ENCODE measurements at regions of chr1 and their contacts with region 1.

Region 1: GRCh38 chr1:162056043-162056442 is 13.4 kb upstream of the NOS1AP start:
- DNase-seq: peak; percentile 74
- H3K4me3 ChIP-seq: no peak overlapping the region
- H3K27ac ChIP-seq: no peak overlapping the region
- H3K4me1 ChIP-seq: peaks cover 0 to 5% (median 2%) of the 10 kb centered on the region in 6 donors
- H3K27me3 ChIP-seq: peaks cover 0 to 33% (median 0%) of the 10 kb centered on the region in 7 donors
- CTCF ChIP-seq: peak; percentile 41 to 81 (median 68)
- POLR2A ChIP-seq: no peak

Region 2: GRCh38 chr1:162206749-162207635 is 150.9 kb after region 1 on chr1:
- intact Hi-C with region 1: no loop called
- DNase-seq: no peak
- H3K4me3 ChIP-seq: no peak overlapping the region
- H3K27ac ChIP-seq: no peak overlapping the region
- H3K4me1 ChIP-seq: no peaks in the 10 kb centered on the region
- H3K27me3 ChIP-seq: peaks cover 0 to 25% (median 0%) of the 10 kb centered on the region in 7 donors
- CTCF ChIP-seq: no peak
- POLR2A ChIP-seq: no peak

Region 3: DNA sequence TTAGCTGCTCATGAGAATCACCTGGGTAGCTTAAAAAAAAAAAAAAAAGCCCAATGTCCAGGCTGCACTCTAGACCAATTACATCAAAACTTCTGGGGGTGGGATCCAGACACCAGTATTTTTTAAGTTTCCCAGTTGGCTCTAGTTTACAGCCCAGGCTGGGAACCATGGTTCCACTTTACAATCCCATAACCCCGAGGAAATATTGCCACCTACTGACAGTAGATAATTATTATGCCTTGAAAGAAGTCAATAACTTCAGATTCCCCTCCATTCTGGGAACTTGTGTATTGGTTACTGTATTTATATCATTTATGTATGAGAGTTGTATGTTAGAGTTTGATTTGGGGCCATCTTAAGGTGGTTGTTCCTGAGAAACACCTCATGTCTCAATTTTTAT is 220.4 kb after region 1 on chr1:
- intact Hi-C with region 1: loop called (anchors 5 kb)
- DNase-seq: no peak
- H3K4me3 ChIP-seq: no peak overlapping the region
- H3K27ac ChIP-seq: no peak overlapping the region
- H3K4me1 ChIP-seq: no peaks in the 10 kb centered on the region
- H3K27me3 ChIP-seq: peaks cover 0 to 22% (median 0%) of the 10 kb centered on the region in 7 donors
- CTCF ChIP-seq: peak in 5 of 11 experiments; percentile 13 to 29 (median 21)
- POLR2A ChIP-seq: no peak

Region 4: DNA sequence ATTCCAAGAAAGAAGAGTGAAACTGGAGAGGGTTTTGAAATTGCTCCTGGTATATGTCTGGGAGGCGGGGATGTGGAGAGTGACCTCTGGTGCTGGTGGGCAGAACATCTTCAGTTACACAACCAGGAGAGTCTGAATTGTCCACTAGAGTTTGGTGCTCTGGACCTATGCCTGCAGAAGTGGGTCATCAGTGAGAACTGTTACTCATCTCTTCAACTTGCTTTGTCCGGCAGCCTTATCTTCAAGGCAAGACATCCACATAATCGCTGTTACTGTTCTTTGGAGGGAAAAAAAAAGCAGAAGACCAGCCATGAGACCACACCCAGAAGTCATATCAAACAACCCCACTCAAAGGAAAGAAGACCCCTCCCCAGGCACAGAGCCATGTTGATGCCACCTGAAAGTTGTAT is 341.0 kb after region 1 on chr1:
- intact Hi-C with region 1: loop called (anchors 5 kb)
- DNase-seq: no peak
- H3K4me3 ChIP-seq: no peak overlapping the region
- H3K27ac ChIP-seq: no peak overlapping the region
- H3K4me1 ChIP-seq: peaks cover 0 to 5% (median 0%) of the 10 kb centered on the region in 6 donors
- H3K27me3 ChIP-seq: peaks cover 0 to 52% (median 5%) of the 10 kb centered on the region in 7 donors
- CTCF ChIP-seq: no peak
- POLR2A ChIP-seq: no peak

Measured in spleen (tissue), 13 donors.